Keratinocyte (primary cell): ENCODE measurements at regions of chr4 and their contacts with region 1.

Region 1: DNA sequence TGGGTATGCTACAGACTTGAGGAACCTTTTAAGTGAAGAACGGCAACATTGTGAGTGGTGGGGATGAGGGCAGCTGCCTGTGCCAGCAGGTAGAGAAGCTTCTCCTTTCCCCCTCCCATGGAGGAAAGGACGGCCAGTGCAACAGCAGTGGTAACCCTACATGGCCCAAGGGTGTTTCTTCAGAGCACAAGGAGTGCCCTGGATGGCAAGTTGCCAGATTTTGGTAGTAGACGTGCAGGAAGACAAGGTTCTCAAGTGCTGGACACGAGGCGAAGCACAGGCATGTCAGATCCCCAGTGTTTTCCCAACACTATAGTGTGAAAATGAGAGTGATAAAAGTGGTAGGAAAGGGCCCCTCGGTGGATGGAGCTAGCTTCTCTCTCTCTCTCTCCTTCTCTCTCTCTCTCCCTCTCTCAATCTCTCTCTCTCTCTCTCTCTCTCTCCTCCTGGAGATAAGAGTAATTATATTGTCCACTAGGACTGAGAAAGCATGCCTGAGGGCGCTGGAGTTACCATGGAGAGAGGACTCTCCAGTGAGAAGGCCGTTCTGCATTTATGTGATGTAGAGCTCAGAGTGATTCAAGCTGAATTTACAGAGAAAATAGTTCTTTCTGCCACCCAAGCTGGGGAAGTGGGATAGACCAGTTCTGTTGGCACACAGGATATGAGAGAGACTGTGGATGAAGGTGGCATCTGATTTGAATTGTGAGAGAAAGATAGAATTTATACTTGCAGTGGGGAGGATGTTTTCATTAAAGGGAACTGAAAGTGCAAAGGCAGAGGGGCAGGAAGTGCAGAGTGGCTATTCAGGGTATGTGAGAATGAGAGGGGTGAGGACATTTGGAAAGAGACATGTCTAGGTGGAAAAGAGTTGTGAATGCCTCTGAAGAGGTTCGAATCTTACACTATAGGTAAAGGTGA is 25.7 kb upstream of the TRPC3 start:
- DNase-seq: no peak
- H3K4me3 ChIP-seq: no peak overlapping the region
- H3K27ac ChIP-seq: no peak overlapping the region
- H3K4me1 ChIP-seq: no peaks in the 10 kb centered on the region
- H3K27me3 ChIP-seq: peaks cover 5% of the 10 kb centered on the region
- CTCF ChIP-seq: no peak

Region 2: GRCh38 chr4:122027203-122027602 is 49.7 kb after region 1 on chr4:
- dilution Hi-C with region 1: loop called (anchors 5 kb)
- DNase-seq: no peak
- H3K4me3 ChIP-seq: no peak overlapping the region
- H3K27ac ChIP-seq: no peak overlapping the region
- H3K4me1 ChIP-seq: no peaks in the 10 kb centered on the region
- H3K27me3 ChIP-seq: no peaks in the 10 kb centered on the region
- CTCF ChIP-seq: no peak